ENCODE measurements at regions of chr9 and their contacts with region 1.

Region 1: GRCh38 chr9:112486221-112487007 is at the start of gene KIAA1958:
- DNase-seq: peak; percentile 83
- H3K4me3 Mint-ChIP-seq: peak within 1 kb of the TSS; percentile 96
- H3K27ac Mint-ChIP-seq: peak within 1 kb of the TSS; percentile 77
- H3K4me1 Mint-ChIP-seq: peaks cover 6% of the 10 kb centered on the region
- H3K27me3 Mint-ChIP-seq: no peaks in the 10 kb centered on the region
- CTCF ChIP-seq: no peak
- total RNA-seq, gene KIAA1958: 4.9 and 5.8 TPM in 2 replicates

Region 2: GRCh38 chr9:112420208-112420607 is 66.2 kb before region 1 on chr9:
- CTCF ChIA-PET with region 1: no interaction called
- POLR2A ChIA-PET with region 1: no interaction called
- intact Hi-C with region 1: no loop called
- DNase-seq: no peak
- H3K4me3 Mint-ChIP-seq: no peak overlapping the region
- H3K27ac Mint-ChIP-seq: no peak overlapping the region
- H3K4me1 Mint-ChIP-seq: no peaks in the 10 kb centered on the region
- H3K27me3 Mint-ChIP-seq: no peaks in the 10 kb centered on the region
- CTCF ChIP-seq: no peak

Region 3: GRCh38 chr9:112556497-112557085 is 70.2 kb after region 1 on chr9:
- CTCF ChIA-PET with region 1: no interaction called
- POLR2A ChIA-PET with region 1: interaction called, 11 read pairs
- intact Hi-C with region 1: no loop called
- DNase-seq: peak; percentile 31
- H3K4me3 Mint-ChIP-seq: no peak overlapping the region
- H3K27ac Mint-ChIP-seq: peak overlapping the region; percentile 49
- H3K4me1 Mint-ChIP-seq: peaks cover 29% of the 10 kb centered on the region
- H3K27me3 Mint-ChIP-seq: no peaks in the 10 kb centered on the region
- CTCF ChIP-seq: no peak

Region 4: GRCh38 chr9:112569186-112569585 is 82.8 kb after region 1 on chr9:
- CTCF ChIA-PET with region 1: interaction called, 3 read pairs
- POLR2A ChIA-PET with region 1: interaction called, 20 read pairs
- intact Hi-C with region 1: no loop called
- DNase-seq: peak; percentile 81
- H3K4me3 Mint-ChIP-seq: no peak overlapping the region
- H3K27ac Mint-ChIP-seq: no peak overlapping the region
- H3K4me1 Mint-ChIP-seq: peaks cover 17% of the 10 kb centered on the region
- H3K27me3 Mint-ChIP-seq: no peaks in the 10 kb centered on the region
- CTCF ChIP-seq: no peak

Region 5: DNA sequence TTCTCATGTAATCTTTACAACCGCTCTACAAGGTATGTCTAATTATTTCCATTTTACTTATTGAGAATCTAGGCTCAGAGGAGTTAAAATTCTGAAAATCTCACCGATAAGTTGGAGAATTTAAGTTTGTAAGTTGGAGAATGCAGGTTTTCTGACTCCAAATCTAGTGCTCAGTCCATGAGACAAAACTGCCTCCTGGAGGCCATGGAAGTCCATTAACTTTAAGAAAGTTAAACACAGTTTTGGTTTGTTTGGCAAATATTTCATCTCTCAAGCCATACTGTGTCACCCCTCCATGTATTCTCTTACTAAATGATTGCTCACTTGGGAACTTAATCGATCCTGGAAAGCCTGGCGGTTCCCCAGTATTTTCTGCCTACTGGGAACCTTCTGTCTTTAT is 178.9 kb after region 1 on chr9:
- CTCF ChIA-PET with region 1: interaction called, 6 read pairs
- POLR2A ChIA-PET with region 1: interaction called, 3 read pairs
- intact Hi-C with region 1: loop called (anchors 2 kb)
- DNase-seq: peak; percentile 31
- H3K4me3 Mint-ChIP-seq: no peak overlapping the region
- H3K27ac Mint-ChIP-seq: no peak overlapping the region
- H3K4me1 Mint-ChIP-seq: no peaks in the 10 kb centered on the region
- H3K27me3 Mint-ChIP-seq: no peaks in the 10 kb centered on the region
- CTCF ChIP-seq: peak; percentile 36

Region 6: DNA sequence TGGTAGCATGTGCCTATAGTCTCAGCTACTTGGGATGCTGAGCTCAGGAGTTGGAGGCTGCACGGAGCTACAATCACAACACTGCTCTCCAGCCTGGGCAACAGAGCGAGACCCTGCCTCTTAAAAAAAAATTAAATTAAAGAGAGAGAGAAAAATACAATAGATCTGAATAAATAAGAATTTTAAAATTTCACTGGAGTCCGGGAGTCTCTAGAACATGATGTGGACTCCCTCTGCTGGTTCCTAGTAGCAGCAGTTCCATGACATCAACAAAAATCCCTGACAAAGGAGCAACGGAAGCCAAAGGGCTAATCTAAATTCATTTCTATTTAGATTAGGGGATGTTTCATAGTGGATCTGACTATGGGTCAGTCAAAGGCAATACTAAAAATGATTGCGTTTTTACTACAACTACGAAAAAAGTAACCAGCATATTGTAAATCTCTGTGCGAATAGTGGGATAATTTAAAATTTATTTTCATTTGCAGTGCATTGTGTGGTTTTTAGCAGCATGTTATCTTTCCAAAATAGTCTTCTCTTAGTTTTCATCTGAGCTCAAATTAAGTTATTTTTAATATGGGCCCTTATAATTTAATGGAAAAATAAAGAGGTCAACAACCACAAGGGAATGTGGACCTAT is 224.8 kb after region 1 on chr9:
- CTCF ChIA-PET with region 1: interaction called, 3 read pairs
- POLR2A ChIA-PET with region 1: interaction called, 4 read pairs
- intact Hi-C with region 1: loop called (anchors 5 kb)
- DNase-seq: peak; percentile 38
- H3K4me3 Mint-ChIP-seq: no peak overlapping the region
- H3K27ac Mint-ChIP-seq: no peak overlapping the region
- H3K4me1 Mint-ChIP-seq: peaks cover 17% of the 10 kb centered on the region
- H3K27me3 Mint-ChIP-seq: no peaks in the 10 kb centered on the region
- CTCF ChIP-seq: peak; percentile 40

Region 7: DNA sequence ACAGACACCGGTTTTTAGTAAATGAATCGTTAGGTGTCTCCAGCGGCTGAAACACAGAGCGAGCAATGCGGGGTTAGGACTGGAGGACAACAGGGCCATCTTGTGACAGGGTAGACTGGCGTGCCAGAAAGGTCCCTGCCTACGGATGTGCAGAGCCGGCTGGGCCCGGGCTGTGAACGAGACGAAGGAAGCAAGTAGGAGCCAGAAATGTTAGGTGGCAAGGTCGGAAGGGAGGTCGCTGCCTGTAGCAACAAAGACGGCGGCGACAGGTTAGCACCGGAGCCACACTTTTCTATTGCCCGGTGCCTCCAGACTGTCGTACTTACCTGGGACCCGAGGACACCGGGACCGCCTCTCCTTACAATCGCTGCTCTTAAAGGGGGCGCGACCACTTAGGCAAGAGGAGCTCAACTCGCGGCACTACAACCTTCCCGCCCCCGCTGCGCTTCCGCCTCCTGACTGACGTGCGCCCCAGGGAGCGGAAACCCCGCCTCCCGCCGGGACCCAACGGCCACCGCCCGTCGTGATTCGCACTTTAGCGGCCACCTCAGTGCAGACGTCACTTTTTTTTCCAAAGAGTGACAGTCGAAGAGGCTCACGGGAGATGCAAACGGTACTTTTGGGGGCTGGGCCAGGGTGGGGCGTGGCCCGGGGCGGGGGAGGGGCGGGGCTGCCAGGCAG is 231.4 kb after region 1 on chr9 and contains the start of gene INIP:
- CTCF ChIA-PET with region 1: interaction called, 6 read pairs
- POLR2A ChIA-PET with region 1: interaction called, 10 read pairs
- intact Hi-C with region 1: loop called (anchors 5 kb)
- DNase-seq: peak; percentile 97
- H3K4me3 Mint-ChIP-seq: peak within 1 kb of the TSS; percentile 100
- H3K27ac Mint-ChIP-seq: peak within 1 kb of the TSS; percentile 98
- H3K4me1 Mint-ChIP-seq: peaks cover 8% of the 10 kb centered on the region
- H3K27me3 Mint-ChIP-seq: no peaks in the 10 kb centered on the region
- CTCF ChIP-seq: peak; percentile 6
- total RNA-seq, gene INIP: 28.0 and 33.5 TPM in 2 replicates

Region 8: DNA sequence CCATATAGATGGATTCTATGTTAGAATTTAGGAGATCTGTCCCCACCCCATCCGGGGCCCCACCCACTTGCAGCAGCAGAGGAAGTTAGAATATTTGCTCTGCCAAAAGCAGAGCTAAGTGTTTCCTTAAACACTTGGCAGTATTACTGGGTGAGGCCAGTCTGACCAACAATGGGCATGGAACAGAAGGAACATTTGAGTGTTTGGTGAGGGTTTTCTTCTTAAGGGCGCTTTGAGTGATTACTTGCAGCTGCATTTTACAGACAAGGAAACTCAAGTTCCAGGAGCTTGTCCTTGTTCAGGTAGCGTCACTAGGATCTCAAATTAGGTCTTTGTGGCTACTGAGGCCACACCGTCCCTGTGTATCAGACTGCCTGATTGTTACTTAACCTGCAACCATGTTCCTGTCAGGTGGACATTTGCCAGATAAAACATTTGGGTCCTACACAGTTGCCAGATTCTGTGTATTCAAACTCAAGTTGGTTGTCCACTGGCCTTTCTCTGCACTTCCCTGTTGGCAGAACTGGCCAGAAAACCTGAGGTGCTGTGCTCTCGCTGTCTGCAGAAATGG is 345.0 kb after region 1 on chr9:
- CTCF ChIA-PET with region 1: no interaction called
- POLR2A ChIA-PET with region 1: no interaction called
- intact Hi-C with region 1: no loop called
- DNase-seq: no peak
- H3K4me3 Mint-ChIP-seq: no peak overlapping the region
- H3K27ac Mint-ChIP-seq: no peak overlapping the region
- H3K4me1 Mint-ChIP-seq: no peaks in the 10 kb centered on the region
- H3K27me3 Mint-ChIP-seq: no peaks in the 10 kb centered on the region
- CTCF ChIP-seq: no peak